ENCODE measurements at regions of chr7 and their contacts with region 1.

Region 1: DNA sequence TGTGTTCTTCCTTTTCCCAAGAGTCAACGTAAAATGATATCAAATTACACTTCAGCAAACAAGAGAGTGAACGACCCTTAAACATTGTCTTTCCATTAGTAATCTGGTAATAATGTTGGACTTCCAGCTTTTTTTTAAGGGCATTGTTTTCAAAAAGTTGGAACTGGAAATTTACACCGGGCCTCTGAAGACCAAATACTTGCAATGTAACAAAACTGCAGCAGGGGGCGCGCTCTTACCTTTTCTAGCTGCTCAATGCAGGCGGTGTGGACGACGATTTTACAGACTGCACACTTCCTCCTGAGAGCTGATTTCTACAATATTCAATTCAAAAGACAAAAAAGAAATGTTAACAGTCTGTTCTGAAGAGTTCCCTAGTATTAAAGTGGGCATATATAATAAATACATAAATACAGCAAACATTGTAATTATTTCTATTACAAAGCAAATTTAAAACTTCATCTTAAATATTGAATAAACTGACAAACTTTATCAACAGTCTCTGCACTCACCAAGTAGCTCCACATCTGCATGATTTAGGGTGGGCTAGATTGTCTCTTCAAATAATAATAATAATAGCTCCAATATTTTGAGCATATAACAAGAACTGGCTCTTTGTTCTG is 190.4 kb downstream of the DGKI start:
- DNase-seq: peak; percentile 82 to 92 (median 84)
- ATAC-seq: peak; percentile 78 to 83
- H3K4me3 ChIP-seq: no peak overlapping the region
- H3K27ac ChIP-seq: no peak overlapping the region
- H3K4me1 ChIP-seq: peaks cover 2% of the 10 kb centered on the region
- H3K27me3 ChIP-seq: no peaks in the 10 kb centered on the region

Region 2: GRCh38 chr7:137772748-137773147 is 116.4 kb after region 1 on chr7:
- intact Hi-C with region 1: no loop called
- DNase-seq: no peak
- ATAC-seq: peak; percentile 43 to 86
- H3K4me3 ChIP-seq: no peak overlapping the region
- H3K27ac ChIP-seq: no peak overlapping the region
- H3K4me1 ChIP-seq: no peaks in the 10 kb centered on the region
- H3K27me3 ChIP-seq: no peaks in the 10 kb centered on the region

Region 3: DNA sequence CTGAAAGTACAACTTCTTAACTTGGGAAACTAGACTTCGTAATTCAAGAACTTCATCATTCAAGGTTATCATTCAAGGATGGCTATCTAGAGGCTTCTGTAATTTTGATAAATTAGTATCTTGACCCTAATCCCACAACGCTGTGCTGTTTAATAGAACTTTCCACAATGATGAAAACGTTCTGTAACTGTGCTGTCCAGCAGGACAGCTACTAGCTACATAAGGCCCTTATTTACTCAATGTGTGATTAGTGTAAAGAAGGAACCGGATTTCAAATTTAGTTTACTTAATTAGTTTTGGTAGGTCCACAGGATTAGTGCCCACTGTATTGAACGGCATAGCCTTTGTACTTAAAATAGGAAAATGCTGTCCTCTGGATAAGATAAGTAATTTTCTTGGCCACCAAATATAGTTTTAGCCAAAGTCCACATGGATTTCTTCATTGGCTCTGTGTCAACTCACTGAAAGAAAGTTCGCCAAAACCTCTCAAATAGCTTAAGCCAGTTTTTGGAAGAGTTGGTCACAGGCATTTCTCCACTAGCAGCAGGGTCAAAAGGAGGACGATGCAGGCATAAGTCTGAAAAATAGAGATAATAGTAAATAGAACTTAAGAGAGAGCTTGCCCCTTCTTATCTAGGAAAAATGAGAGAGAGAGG is 173.1 kb after region 1 on chr7:
- intact Hi-C with region 1: no loop called
- DNase-seq: no peak
- ATAC-seq: peak; percentile 45 to 57
- H3K4me3 ChIP-seq: no peak overlapping the region
- H3K27ac ChIP-seq: no peak overlapping the region
- H3K4me1 ChIP-seq: peaks cover 2% of the 10 kb centered on the region
- H3K27me3 ChIP-seq: no peaks in the 10 kb centered on the region

Region 4: DNA sequence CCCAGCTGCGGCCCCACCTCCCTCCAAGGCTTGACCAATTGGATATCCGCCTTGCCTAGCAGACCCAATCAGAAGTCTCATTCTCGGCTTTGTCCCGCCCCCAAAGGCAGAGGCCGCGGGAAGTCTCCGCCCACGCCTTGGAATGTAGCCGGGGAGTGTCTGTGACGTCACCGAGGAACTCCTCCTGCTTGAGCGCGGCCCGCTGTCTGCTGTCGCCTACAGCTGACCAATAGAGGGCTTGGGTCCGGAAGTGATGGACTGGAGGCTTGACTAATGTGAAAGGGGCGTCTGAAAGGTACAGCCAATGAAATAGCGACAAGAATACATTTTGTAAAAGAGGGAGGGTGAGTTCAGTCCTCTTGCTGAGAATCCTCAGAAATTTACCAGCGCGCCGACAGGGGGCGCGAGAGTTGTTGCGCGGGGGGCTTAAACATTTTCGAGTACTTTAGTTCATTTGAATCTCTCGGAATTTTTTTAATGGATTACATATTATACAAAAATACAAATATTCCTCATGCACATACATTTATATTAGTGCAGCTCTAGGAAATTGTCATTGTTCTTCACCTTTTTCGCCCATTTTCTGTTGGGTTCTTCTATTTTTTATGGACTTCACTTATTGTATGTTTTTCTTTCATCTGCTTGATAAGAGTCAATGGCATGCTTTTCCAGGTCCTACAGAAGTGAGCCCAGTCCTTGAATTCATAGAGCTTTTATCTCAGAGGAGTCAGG is 345.9 kb after region 1 on chr7:
- intact Hi-C with region 1: loop called in 2 of 4 experiments (anchors 5 to 10 kb)
- DNase-seq: peak; percentile 98 to 99 (median 99)
- ATAC-seq: peak; percentile 97 to 98
- H3K4me3 ChIP-seq: peak overlapping the region; percentile 64
- H3K27ac ChIP-seq: peak overlapping the region; percentile 90
- H3K4me1 ChIP-seq: peaks cover 6% of the 10 kb centered on the region
- H3K27me3 ChIP-seq: no peaks in the 10 kb centered on the region

Region 5: DNA sequence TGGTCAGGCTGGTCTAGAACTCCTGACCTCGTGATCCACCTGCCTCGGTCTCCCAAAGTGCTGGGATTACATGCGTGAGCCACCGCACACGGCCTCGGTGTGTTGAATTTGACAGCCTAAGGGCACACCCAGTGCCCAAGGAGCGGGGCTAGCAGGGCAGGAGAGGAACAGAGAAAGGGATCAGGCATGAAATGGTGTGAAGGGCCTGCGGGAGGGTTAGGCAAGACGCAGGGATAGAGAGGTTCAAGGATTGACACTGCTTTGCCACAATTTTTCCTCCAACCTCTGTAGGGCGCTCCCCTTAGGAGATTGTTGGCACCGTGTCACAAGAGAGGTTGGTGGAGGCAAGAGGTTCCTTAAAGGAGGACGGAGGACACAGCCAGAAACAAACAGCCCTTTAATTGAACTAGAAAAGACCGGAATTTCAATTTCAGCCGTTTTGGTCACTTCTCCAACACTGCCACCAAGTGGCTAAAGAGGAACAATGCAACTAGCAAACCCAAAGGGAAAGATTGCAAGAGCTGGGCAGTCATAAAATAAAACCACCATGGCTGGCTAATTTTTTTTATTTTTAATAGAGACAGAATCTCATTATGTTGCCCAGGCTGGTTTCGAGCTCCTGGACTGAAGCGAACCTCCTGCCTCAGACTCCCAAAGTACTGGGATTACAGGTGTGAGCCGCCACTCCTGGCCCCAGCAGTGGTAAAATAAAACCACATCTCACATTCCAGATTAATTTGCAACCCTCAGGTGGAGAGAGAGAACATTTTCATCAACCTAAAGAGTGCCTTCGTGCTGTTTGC is 352.4 kb after region 1 on chr7:
- intact Hi-C with region 1: loop called in 3 of 4 experiments (anchors 5 to 10 kb)
- DNase-seq: peak in 1 of 3 donors; percentile 48
- ATAC-seq: peak; percentile 53 to 64
- H3K4me3 ChIP-seq: no peak overlapping the region
- H3K27ac ChIP-seq: no peak overlapping the region
- H3K4me1 ChIP-seq: no peaks in the 10 kb centered on the region
- H3K27me3 ChIP-seq: no peaks in the 10 kb centered on the region

Region 6: DNA sequence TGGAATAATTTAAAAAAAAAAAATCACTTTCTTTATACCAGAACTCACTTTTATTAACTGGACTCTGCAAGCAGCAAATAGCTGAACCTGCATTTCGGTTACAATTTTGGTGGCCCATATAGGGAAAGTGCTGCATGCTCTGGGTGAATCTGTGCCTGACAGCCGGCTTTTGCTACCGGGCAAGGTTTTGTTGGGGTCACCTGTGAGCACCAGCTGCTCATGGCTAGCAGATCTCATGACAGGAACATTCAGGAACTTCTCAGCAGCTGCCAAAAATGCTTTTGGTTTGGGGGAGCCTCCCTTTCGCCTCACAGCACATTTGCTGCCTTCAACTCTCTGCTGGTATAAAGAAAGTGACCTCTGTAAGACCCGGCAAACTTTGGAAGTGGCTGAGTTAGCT is 358.8 kb after region 1 on chr7:
- intact Hi-C with region 1: loop called in 1 of 4 experiments (anchors 10 kb)
- DNase-seq: no peak
- ATAC-seq: no peak
- H3K4me3 ChIP-seq: no peak overlapping the region
- H3K27ac ChIP-seq: no peak overlapping the region
- H3K4me1 ChIP-seq: no peaks in the 10 kb centered on the region
- H3K27me3 ChIP-seq: no peaks in the 10 kb centered on the region